ENCODE measurements at regions of chr14 and their contacts with region 1.

Region 1: DNA sequence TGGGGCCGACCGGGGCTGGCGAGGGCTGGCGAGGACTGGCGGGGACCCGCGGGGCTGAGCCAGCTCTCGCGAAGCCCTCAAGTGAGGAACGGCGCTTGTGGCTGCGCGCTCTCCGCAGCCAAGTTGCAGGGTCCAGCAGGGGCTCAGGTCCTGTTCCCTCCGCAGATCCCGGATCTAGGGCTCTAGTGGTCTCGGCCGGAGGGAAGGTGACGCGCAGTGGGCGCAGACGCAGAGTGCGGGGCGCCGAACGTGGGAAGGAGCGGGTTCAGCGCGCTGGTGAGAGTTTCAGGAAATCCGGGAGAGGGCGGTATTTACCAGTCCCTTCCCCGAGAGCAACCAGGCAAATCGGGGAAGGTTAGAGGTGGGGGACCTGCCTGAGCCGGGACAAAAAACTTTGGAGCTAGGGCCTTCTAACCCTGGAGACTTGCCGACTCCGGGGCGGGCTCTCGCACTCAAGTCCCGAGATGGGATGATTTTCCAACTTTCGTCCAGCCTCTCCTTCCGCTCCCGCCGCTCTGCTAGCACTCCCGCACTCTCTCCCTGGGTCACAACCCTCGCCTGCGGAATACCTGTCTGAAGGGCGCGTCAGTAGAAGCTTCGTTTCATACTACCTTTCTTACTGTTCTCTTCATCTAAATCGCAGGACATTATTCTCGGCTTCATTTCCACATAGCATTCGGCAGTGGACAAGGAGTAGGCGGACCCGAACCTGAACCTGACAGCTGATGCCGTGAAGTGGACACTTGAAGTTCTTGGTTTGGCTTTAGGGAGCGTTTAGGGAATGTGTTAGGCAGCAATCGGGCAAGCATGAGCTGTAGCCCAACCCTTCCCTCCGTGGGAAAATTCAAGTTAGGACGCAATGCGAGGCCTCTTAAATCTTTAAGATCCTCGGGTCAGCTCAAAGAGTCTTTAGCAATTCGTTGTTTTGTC is 13.6 kb upstream of the PAX9 start:
- DNase-seq: no peak
- H3K4me3 ChIP-seq: peak overlapping the region; percentile 37
- H3K27ac ChIP-seq: no peak overlapping the region
- H3K4me1 ChIP-seq: peaks cover 11% of the 10 kb centered on the region
- H3K27me3 ChIP-seq: peaks cover 73% of the 10 kb centered on the region
- CTCF ChIP-seq: peak; percentile 52

Region 2: DNA sequence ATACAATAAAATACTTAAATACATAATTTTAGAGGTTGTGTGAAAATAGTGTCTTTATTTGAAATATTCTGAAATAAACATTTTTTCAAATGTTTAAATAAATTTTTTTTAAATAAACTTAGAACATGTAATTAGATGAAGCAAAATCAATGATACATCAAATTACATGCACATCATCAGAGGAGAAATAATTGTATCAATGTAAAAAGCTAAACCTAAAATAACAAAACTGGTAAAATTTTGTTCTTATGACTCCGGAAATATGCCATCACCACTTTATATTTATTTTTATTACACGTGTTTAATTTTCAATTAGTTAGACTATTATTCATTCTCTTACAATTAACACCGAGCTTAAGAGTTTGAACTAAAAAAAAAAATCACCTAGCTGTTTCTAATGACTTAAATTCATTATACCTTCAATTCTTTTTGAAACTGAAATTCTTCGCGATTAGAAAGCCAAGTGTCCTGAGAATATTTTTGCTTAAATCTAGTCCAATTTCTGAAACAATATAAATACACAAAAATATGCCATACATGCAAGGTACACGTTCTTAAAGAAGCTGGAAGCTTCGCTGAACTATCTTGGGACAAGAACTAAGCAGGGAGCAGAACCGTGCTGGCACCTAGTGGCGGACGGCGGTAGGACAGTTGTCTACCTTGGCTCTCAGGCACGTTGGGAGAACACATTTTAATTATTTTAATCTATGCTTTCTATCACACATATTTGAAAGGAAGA is 293.9 kb after region 1 on chr14:
- intact Hi-C with region 1: loop called (anchors 5 kb)
- DNase-seq: peak; percentile 78
- H3K4me3 ChIP-seq: no peak overlapping the region
- H3K27ac ChIP-seq: no peak overlapping the region
- H3K4me1 ChIP-seq: no peaks in the 10 kb centered on the region
- H3K27me3 ChIP-seq: no peaks in the 10 kb centered on the region
- CTCF ChIP-seq: peak; percentile 92